Aorta (tissue), 5 donors: ENCODE measurements at regions of chr6 and their contacts with region 1.

Region 1: DNA sequence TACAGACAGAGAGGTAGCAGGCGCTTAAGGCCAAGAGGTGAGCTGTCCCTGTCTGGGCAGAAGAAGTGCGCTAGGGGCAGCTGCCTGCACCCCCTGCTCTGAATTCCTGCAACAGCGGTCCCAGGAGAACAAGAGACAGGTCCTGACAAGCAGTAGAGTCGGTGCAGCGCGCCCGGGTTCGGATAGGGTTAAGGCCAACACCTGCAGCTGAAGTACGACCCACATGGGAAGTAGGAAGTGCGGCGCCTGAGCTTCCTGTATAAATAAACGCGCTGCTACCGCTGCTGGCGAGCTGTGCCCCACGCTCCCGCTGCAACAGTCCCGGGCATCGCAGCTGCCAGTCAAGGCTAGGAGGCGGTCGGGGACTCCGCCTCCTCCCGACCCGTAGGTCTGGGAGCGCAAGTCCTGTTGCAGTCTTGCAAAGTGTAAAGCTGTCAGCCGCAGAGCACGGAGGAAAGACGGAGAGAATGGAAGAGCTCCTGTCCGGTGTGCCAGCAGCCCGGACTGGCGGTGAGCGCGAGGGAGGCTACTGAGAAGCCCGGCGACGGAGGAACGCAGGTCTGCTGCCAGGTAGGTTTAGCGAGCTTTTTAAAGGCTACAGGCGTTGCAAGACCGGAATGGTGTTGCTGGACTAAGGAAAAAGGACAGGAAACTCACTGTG is at the start of gene RNF144B:
- DNase-seq: peak; percentile 92 to 93
- ATAC-seq: peak; percentile 93
- H3K4me3 ChIP-seq: peak within 1 kb of the TSS; percentile 43 to 96
- H3K27ac ChIP-seq: peak within 1 kb of the TSS in 1 of 2 donors; percentile 64
- H3K4me1 ChIP-seq: peaks cover 0 to 2% of the 10 kb centered on the region in 2 donors
- H3K27me3 ChIP-seq: no peaks in the 10 kb centered on the region
- total RNA-seq, gene RNF144B: 24.2 to 35.9 TPM

Region 2: GRCh38 chr6:18323935-18324705 is 63.1 kb before region 1 on chr6:
- intact Hi-C with region 1: loop called in 1 of 2 experiments (anchors 10 kb)
- DNase-seq: no peak
- ATAC-seq: no peak
- H3K4me3 ChIP-seq: no peak overlapping the region
- H3K27ac ChIP-seq: no peak overlapping the region
- H3K4me1 ChIP-seq: peaks cover 0 to 4% of the 10 kb centered on the region in 2 donors
- H3K27me3 ChIP-seq: no peaks in the 10 kb centered on the region

Region 3: GRCh38 chr6:18343741-18344140 is 43.5 kb before region 1 on chr6:
- intact Hi-C with region 1: loop called in 1 of 2 experiments (anchors 5 kb)
- DNase-seq: no peak
- ATAC-seq: no peak
- H3K4me3 ChIP-seq: no peak overlapping the region
- H3K27ac ChIP-seq: no peak overlapping the region
- H3K4me1 ChIP-seq: peaks cover 4 to 5% of the 10 kb centered on the region in 2 donors
- H3K27me3 ChIP-seq: no peaks in the 10 kb centered on the region

Region 4: DNA sequence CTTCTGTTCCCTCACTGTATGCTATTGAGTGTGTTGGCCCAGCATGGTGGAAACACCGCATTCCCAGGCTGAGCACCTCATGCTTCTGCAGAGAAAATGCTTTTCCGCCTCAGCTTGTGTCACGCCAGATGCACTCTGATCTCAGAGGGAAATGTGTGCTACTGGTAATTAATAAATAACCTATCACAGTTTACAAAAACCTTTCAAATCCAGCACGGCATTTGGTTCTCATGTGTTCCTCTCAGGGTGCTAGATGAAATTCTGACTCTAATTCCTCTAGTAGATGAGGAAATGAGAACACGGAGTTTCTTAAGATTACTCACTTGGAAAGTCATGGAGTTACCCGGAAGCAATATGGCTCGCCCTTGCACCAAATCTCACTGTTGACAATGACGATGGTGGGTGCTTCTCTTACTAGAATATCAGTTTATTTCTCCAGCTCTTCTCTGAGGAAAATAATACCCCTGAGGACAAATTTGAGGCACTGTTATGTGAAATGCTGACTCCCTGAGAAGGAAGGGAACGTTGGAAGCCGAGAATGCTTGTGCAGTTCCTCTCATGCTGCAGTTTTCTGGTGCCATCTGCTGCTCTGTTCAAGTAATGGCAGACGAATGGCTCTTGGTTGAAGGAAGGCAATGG is 116.5 kb after region 1 on chr6:
- intact Hi-C with region 1: loop called in 1 of 2 experiments (anchors 10 kb)
- DNase-seq: peak in 1 of 2 donors; percentile 54
- ATAC-seq: peak; percentile 87
- H3K4me3 ChIP-seq: peak overlapping the region in 1 of 2 donors; percentile 25
- H3K27ac ChIP-seq: no peak overlapping the region
- H3K4me1 ChIP-seq: no peaks in the 10 kb centered on the region
- H3K27me3 ChIP-seq: no peaks in the 10 kb centered on the region